ENCODE measurements at regions of chr5 and their contacts with region 1.

Region 1: GRCh38 chr5:134577796-134578363 is 52.4 kb downstream of the JADE2 start:
- DNase-seq: peak; percentile 80 to 84
- H3K4me3 ChIP-seq: no peak overlapping the region
- H3K27ac ChIP-seq: no peak overlapping the region
- H3K4me1 ChIP-seq: peaks cover 0 to 25% of the 10 kb centered on the region in 2 donors
- H3K27me3 ChIP-seq: no peaks in the 10 kb centered on the region
- CTCF ChIP-seq: peak; percentile 48 to 88 (median 78)
- POLR2A ChIP-seq: no peak

Region 2: DNA sequence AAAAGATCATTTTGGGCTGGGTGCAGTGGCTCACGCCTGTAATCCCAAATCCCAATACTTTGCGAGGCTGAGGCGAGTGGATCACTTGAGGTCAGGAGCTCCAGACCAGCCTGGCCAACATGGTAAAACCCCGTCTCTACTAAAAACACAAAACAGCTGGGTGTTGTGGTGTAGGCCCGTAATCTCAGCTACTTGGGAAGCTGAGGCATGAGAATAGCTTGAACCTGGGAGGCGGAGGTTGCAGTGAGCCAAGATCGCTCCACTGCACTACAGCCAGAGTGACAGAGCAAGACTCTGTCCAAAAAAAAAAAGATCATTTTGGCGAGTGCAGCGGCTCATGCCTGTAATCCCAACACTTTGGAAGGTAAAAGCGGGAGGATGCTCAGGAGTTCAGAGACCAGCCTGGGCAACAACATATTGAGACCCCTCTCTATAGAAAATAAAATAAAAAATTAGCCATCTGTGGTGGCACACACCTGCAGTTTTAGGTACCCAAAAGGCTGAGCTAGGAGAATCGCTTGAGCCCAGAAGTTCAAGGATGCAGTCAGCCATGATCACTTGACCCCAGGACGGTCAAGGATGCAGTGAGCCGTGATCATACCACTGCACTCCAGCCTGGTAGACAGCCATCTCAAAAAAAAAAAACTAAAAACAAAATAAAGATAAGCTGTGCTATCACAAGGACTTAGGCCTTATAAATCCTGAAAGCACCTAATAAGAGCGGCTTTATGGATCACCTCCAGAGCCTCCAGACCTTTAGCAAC is 368.2 kb before region 1 on chr5:
- intact Hi-C with region 1: no loop called
- DNase-seq: peak; percentile 79 to 83
- H3K4me3 ChIP-seq: no peak overlapping the region
- H3K27ac ChIP-seq: peak overlapping the region; percentile 12 to 52 (median 51)
- H3K4me1 ChIP-seq: peaks cover 58 to 72% of the 10 kb centered on the region in 2 donors
- H3K27me3 ChIP-seq: no peaks in the 10 kb centered on the region
- CTCF ChIP-seq: no peak
- POLR2A ChIP-seq: no peak

Region 3: DNA sequence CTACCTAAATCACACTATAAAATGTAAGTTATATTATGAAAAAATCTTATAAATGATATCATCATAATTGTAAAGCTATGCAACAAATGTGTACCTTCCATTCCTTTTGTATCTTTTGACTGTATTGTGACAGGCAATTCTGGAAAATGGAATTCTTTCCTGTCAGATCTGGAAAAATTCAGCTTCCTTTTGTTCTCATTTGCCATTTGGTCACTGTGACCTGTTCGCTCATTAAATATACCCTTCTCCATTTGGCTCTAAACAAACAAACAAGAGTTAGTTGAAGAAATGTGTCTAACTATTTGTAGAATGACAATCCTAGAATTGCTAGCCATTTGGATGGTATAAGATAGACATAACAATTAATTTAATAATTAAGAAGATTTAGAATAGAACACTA is 273.6 kb before region 1 on chr5:
- intact Hi-C with region 1: loop called (anchors 5 kb)
- DNase-seq: no peak
- H3K4me3 ChIP-seq: no peak overlapping the region
- H3K27ac ChIP-seq: no peak overlapping the region
- H3K4me1 ChIP-seq: no peaks in the 10 kb centered on the region
- H3K27me3 ChIP-seq: no peaks in the 10 kb centered on the region
- CTCF ChIP-seq: no peak
- POLR2A ChIP-seq: no peak

Region 4: DNA sequence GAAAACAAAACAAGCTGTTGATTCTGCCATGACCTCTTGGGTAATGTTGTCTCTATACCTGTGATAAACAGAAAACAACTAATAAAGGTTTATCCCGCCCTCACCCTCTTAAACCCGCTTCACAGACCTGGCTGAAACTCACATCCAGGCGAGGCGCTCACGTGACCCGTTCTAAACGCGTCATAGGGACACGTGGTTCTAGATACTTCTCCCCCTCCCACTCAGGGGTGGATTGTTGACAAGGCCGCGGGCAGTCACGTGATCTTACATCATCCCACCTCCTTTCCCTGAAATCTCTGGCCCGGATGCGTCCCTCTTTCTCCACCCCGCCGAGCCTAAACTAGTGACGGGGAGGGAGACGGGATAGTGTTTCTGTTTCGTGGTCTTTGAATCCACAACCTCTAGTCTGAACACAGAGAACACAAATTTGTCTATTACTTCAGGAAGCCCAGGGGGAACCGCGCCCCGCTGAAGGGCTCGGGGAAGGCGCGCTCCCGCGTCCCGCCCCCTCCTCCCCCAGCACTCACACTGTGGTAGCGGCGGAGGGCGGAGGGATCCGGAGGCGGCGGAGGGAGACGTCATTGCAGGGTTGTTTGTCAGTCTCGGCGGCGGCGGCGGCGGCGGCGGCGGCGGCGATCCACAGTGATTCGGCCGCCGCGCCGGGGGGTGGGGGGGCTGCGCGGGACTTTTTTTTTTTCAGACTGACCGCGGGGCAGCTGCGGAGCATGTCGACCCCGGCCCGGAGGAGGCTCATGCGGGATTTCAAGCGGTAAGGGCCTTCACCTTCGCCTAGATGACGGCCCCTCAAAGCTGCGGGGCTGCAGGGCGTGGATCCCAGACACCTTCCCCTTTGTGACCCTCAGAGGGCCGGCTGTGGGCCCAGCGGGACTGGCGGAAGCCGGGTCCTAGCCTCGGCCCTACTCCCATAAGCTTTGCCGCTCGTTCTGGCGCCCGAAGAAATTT is 206.7 kb before region 1 on chr5 and contains the start of gene UBE2B:
- intact Hi-C with region 1: loop called (anchors 10 kb)
- DNase-seq: peak; percentile 99
- H3K4me3 ChIP-seq: peak within 1 kb of the TSS; percentile 62 to 96 (median 91)
- H3K27ac ChIP-seq: peak within 1 kb of the TSS; percentile 94 to 98 (median 98)
- H3K4me1 ChIP-seq: peaks cover 10 to 14% of the 10 kb centered on the region in 2 donors
- H3K27me3 ChIP-seq: no peaks in the 10 kb centered on the region
- CTCF ChIP-seq: peak in 2 of 6 experiments; percentile 5 to 34
- POLR2A ChIP-seq: peak; percentile 14 to 89
- total RNA-seq, gene UBE2B: 36.8 to 83.2 (median 41.2) TPM